Ascending aorta (tissue), 2 donors: ENCODE measurements at regions of chr9 and their contacts with region 1.

Region 1: GRCh38 chr9:107465467-107466451 is 23.8 kb downstream of the KLF4 start:
- DNase-seq: peak in 1 of 2 donors; percentile 84
- H3K4me3 ChIP-seq: peak overlapping the region; percentile 64 to 68
- H3K27ac ChIP-seq: no peak overlapping the region
- H3K4me1 ChIP-seq: no peaks in the 10 kb centered on the region
- H3K27me3 ChIP-seq: peaks cover 6% of the 10 kb centered on the region
- CTCF ChIP-seq: peak; percentile 92 to 95 (median 92)

Region 2: GRCh38 chr9:108272349-108272899 is 806.7 kb after region 1 on chr9:
- intact Hi-C with region 1: loop called (anchors 10 kb)
- DNase-seq: peak in 1 of 2 donors; percentile 13
- H3K4me3 ChIP-seq: peak overlapping the region in 1 of 2 donors; percentile 29
- H3K27ac ChIP-seq: no peak overlapping the region
- H3K4me1 ChIP-seq: no peaks in the 10 kb centered on the region
- H3K27me3 ChIP-seq: no peaks in the 10 kb centered on the region
- CTCF ChIP-seq: peak; percentile 34 to 36 (median 35)

Region 3: DNA sequence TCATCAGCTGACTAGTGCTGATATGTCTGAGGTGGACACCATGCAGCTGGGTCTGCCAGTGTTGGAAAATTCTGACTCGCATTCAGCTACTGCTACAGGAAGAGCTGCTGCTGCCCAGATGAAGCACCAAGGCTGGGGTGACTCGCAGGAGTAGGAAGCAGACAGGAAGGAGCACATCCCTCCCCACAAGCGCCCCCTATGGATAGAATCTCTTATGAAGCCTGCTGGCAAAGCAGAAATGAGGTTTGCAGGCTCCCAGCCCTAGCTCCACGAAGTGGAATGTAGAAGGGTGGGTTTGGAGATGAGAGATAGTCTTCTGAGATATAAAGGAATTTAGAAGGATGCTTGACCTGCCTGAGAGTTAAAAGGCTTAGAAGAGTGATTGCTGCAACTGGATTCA is 947.0 kb after region 1 on chr9:
- intact Hi-C with region 1: loop called (anchors 10 kb)
- DNase-seq: no peak
- H3K4me3 ChIP-seq: no peak overlapping the region
- H3K27ac ChIP-seq: no peak overlapping the region
- H3K4me1 ChIP-seq: no peaks in the 10 kb centered on the region
- H3K27me3 ChIP-seq: no peaks in the 10 kb centered on the region
- CTCF ChIP-seq: no peak